ENCODE measurements at regions of chr20 and their contacts with region 1.

Region 1: DNA sequence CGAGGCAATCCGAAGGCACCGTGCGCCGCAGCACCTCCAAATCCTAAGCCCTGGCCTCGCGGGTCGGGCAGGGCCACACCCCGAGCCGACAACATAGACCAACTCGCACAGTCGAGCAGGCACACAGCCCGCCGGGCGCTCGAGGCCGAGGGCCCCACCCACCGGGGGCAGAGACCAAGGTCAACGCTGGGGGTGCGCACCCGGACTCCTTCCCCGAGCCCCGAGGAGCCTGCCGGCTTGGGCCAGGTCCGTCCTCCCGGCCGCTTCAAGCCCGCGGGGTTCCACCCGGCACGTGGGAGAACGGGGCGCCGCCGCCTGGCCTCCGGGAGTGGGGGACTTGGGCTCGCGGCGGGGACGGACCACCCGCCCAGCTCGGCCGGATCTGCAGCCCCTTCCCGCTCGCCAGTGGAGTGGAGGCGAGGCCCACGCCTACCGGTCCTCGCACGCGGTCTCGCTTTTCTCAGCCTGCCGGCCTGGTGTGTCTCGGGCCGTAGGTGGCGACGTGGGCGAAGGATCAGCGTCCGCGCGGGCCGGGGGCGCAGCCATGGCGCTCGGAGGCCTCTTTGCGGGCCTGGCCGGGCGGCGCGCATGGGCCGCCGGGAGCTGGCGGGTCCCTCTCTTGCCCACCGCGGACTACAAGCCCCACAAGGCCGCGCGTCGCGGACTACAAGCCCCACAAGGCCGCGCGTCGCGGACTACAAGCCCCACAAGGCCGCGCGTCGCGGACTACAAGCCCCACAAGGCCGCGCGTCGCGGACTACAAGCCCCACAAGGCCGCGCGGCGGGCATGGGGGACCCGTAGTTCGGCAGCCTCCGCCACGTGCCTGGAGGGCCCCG is at the start of gene UCKL1:
- DNase-seq: peak; percentile 93
- H3K4me3 ChIP-seq: peak within 1 kb of the TSS; percentile 38 to 78 (median 76)
- H3K27ac ChIP-seq: peak within 1 kb of the TSS; percentile 42
- H3K4me1 ChIP-seq: peaks cover 10% of the 10 kb centered on the region
- H3K27me3 ChIP-seq: no peaks in the 10 kb centered on the region
- CTCF ChIP-seq: no peak
- POLR2A ChIP-seq: peak; percentile 89
- total RNA-seq, gene UCKL1: 51.1 TPM in 2 replicates

Region 2: GRCh38 chr20:63911176-63911575 is 44.9 kb before region 1 on chr20:
- CTCF ChIA-PET with region 1: interaction called, 3 read pairs
- POLR2A ChIA-PET with region 1: no interaction called
- dilution Hi-C with region 1: no loop called
- intact Hi-C with region 1: loop called (anchors 1 kb)
- DNase-seq: no peak
- H3K4me3 ChIP-seq: no peak overlapping the region
- H3K27ac ChIP-seq: no peak overlapping the region
- H3K4me1 ChIP-seq: no peaks in the 10 kb centered on the region
- H3K27me3 ChIP-seq: no peaks in the 10 kb centered on the region
- CTCF ChIP-seq: no peak
- POLR2A ChIP-seq: no peak

Region 3: DNA sequence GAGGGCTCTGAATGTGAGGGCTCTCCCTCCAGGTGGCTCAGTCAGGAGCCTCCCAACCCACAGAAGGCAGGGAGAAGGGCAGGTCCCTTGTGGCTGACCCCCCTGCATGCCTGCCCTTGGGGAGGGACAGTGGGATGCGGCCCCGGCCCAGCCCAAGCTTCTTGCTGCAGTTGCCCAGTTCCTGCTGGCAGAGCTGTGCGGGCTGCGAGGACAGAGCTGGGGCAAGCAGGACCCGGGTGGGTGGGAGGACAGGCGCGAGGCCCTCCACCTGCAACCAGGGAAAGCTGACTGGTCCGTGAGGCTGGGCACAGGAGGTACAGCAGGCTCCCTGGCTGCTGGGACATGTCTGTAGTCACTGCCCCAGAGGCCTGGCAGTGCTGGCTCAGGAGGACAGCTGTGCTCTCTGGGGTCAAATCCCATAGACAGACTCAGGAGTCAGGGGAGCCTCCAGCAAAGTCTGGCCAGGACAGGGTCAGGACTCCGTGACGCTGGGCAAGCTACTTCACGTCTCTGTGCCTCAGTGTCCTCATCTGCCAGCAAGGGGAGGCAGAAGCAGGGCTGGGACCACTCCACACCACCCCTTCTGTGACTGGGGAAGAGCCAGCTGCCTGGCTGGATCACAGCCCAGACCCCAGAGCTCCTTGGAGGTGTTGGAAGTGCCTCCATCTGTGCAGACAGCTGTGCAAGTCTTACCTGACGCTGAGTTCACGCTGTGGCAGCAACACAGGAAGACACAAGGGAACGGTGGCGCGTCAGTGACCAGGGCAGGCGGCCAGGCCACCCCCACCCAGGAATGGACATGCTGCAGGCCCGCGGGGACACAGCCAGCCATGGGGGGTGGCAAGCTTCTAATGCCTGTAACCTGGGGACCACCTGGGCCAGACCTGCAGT is 12.8 kb before region 1 on chr20:
- CTCF ChIA-PET with region 1: no interaction called
- POLR2A ChIA-PET with region 1: no interaction called
- dilution Hi-C with region 1: no loop called
- intact Hi-C with region 1: no loop called
- DNase-seq: no peak
- H3K4me3 ChIP-seq: no peak overlapping the region
- H3K27ac ChIP-seq: no peak overlapping the region
- H3K4me1 ChIP-seq: peaks cover 17% of the 10 kb centered on the region
- H3K27me3 ChIP-seq: no peaks in the 10 kb centered on the region
- CTCF ChIP-seq: no peak
- POLR2A ChIP-seq: peak; percentile 20